Prostate gland (tissue), 2 donors: ENCODE measurements at regions of chr20 and their contacts with region 1.

Region 1: GRCh38 chr20:17898548-17898994 is 70.0 kb downstream of the SNX5 start:
- DNase-seq: peak; percentile 80
- H3K4me3 ChIP-seq: no peak overlapping the region
- H3K27ac ChIP-seq: no peak overlapping the region
- H3K4me1 ChIP-seq: peaks cover 3% of the 10 kb centered on the region
- H3K27me3 ChIP-seq: no peaks in the 10 kb centered on the region
- CTCF ChIP-seq: peak; percentile 79 to 96 (median 93)
- POLR2A ChIP-seq: no peak

Region 2: DNA sequence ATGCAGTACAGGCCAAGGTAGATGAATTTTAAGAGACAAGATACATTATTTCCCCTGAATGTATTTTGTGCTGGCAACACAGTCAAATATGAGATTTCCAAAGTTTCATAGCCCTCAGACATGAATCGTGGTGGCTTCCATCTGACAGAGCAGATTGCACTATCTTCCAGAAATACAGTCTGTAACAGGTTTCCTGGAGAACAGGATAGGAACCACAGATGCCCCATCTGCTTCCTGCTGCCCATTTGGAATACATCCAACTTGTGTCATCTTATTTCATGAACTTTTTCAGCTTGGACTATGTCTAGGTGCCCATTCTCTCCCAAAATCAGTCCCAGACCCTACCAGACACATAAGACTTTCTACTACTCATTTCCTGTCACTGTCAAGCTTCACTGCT is 1751.4 kb before region 1 on chr20:
- intact Hi-C with region 1: no loop called
- DNase-seq: no peak
- H3K4me3 ChIP-seq: no peak overlapping the region
- H3K27ac ChIP-seq: no peak overlapping the region
- H3K4me1 ChIP-seq: no peaks in the 10 kb centered on the region
- H3K27me3 ChIP-seq: no peaks in the 10 kb centered on the region
- CTCF ChIP-seq: no peak
- POLR2A ChIP-seq: no peak

Region 3: GRCh38 chr20:17504898-17505635 is 393.5 kb before region 1 on chr20:
- intact Hi-C with region 1: loop called (anchors 5 kb)
- DNase-seq: peak; percentile 18
- H3K4me3 ChIP-seq: peak overlapping the region; percentile 30 to 34
- H3K27ac ChIP-seq: peak overlapping the region in 1 of 2 donors; percentile 15
- H3K4me1 ChIP-seq: no peaks in the 10 kb centered on the region
- H3K27me3 ChIP-seq: no peaks in the 10 kb centered on the region
- CTCF ChIP-seq: peak; percentile 60 to 77 (median 68)
- POLR2A ChIP-seq: no peak

Region 4: DNA sequence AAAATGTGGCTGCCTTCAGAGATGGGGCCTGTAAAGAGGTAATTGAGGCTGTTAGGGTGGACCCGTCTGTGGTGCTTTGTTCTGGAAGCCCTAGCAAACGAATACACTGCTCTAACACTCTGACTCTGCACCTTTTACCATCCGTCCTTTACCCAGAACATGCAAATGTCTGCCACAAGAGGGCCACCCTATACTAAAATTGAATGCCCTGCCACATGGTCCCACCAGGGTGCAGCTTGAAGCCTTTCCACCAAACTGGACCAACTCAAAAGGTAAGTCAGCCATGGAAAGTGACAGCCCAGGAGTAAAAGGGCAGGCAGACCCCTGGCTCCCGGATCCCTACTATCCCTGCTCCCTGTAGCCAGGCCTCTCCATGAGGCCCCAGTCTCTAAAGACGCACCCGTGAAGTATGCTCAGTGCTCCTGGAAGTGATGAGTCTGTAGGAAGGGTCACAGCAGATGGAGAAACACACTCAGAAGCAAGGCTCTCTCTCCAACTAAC is 361.6 kb before region 1 on chr20:
- intact Hi-C with region 1: loop called (anchors 10 kb)
- DNase-seq: peak; percentile 75
- H3K4me3 ChIP-seq: no peak overlapping the region
- H3K27ac ChIP-seq: no peak overlapping the region
- H3K4me1 ChIP-seq: no peaks in the 10 kb centered on the region
- H3K27me3 ChIP-seq: no peaks in the 10 kb centered on the region
- CTCF ChIP-seq: peak; percentile 74 to 97 (median 93)
- POLR2A ChIP-seq: no peak

Region 5: GRCh38 chr20:17682103-17682888 is 216.3 kb before region 1 on chr20 and contains the start of gene RRBP1:
- intact Hi-C with region 1: loop called (anchors 2 kb)
- DNase-seq: peak; percentile 98
- H3K4me3 ChIP-seq: peak within 1 kb of the TSS; percentile 85 to 88
- H3K27ac ChIP-seq: peak within 1 kb of the TSS; percentile 86 to 91
- H3K4me1 ChIP-seq: peaks cover 2% of the 10 kb centered on the region
- H3K27me3 ChIP-seq: no peaks in the 10 kb centered on the region
- CTCF ChIP-seq: peak in 2 of 4 experiments; percentile 46 to 57
- POLR2A ChIP-seq: peak; percentile 98
- total RNA-seq, gene RRBP1: 112 to 148 TPM

Region 6: DNA sequence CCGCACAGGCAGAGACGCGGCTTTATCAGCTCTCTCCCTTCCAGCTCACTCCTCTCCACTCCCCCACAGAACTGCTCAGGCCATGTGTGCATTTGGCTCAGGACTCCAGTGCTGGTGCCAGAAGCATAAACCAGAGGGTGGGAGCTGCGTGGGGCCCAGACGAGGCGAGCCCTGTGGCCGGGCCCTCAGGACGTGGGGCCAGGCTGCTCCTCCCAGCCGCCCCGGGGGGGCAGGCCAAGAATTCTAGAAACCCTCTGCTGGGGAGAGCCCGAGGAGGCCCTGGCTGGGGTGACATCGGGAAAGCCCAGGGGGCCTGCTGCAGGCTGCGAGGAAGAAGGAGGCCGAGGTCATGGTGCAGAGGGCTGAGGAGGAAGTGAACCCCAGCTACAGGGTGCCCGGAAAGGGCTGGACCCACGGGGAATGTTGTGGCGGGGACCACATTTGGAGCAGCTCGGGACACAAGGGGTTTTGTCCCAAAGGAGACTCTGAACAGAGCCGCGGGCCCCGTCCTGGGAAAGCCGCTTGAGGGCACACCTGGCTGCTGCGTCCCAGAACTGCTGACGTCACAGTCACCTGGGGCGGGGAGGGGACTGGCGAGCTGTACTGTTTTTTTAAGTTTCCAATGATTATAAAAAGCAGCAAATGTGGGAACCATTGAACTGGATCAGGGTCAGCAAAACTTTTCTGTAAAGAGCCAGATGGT is 91.7 kb before region 1 on chr20:
- intact Hi-C with region 1: loop called (anchors 5 kb)
- DNase-seq: no peak
- H3K4me3 ChIP-seq: no peak overlapping the region
- H3K27ac ChIP-seq: peak overlapping the region; percentile 42 to 52
- H3K4me1 ChIP-seq: peaks cover 6% of the 10 kb centered on the region
- H3K27me3 ChIP-seq: no peaks in the 10 kb centered on the region
- CTCF ChIP-seq: no peak
- POLR2A ChIP-seq: no peak

Region 7: GRCh38 chr20:17938871-17939619 is 40.5 kb after region 1 on chr20:
- intact Hi-C with region 1: loop called (anchors 5 kb)
- DNase-seq: peak; percentile 55
- H3K4me3 ChIP-seq: no peak overlapping the region
- H3K27ac ChIP-seq: no peak overlapping the region
- H3K4me1 ChIP-seq: no peaks in the 10 kb centered on the region
- H3K27me3 ChIP-seq: no peaks in the 10 kb centered on the region
- CTCF ChIP-seq: peak; percentile 49 to 83 (median 74)
- POLR2A ChIP-seq: no peak